Tibial artery (tissue), 4 donors: ENCODE measurements at regions of chr14 and their contacts with region 1.

Region 1: DNA sequence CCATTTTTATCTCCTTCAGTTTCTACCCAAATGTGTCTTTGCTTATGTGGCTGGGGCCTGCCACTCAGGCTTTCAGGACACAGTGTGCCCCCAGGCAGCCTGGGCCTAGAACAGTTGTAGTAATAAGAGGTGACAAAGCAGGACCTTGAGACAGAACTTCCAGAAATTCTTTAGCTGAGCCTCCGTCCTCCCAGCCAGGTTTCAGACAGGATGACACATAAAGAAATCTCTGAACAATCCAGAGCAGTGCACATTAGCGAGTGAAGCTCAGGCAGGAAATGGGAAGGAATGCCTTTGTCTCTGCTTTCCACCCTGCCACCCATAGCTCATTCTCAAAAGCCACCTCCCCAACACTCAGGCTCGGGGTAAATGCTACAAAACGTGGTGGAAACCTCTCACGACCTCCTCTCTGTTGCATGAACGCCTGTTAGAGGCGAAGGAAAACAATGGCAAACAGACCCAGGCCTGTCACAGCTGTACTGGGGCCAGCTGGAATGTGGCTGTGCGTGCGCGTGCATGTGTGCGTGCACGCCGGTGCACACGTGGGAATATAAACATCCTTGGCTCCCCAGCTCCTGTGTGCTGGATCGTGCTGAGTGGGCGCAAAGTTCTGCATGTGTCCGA is 286.7 kb downstream of the ZFP36L1 start:
- DNase-seq: no peak
- H3K4me3 ChIP-seq: no peak overlapping the region
- H3K27ac ChIP-seq: no peak overlapping the region
- H3K4me1 ChIP-seq: peaks cover 0 to 43% (median 21%) of the 10 kb centered on the region in 4 donors
- H3K27me3 ChIP-seq: no peaks in the 10 kb centered on the region
- CTCF ChIP-seq: no peak

Region 2: GRCh38 chr14:67541448-67542387 is 964.4 kb before region 1 on chr14:
- intact Hi-C with region 1: no loop called
- DNase-seq: no peak
- H3K4me3 ChIP-seq: no peak overlapping the region
- H3K27ac ChIP-seq: no peak overlapping the region
- H3K4me1 ChIP-seq: no peaks in the 10 kb centered on the region
- H3K27me3 ChIP-seq: peaks cover 0 to 3% of the 10 kb centered on the region in 2 donors
- CTCF ChIP-seq: no peak

Region 3: GRCh38 chr14:68412505-68413496 is 93.3 kb before region 1 on chr14:
- intact Hi-C with region 1: loop called (anchors 10 kb)
- DNase-seq: no peak
- H3K4me3 ChIP-seq: no peak overlapping the region
- H3K27ac ChIP-seq: no peak overlapping the region
- H3K4me1 ChIP-seq: peaks cover 0 to 8% (median 2%) of the 10 kb centered on the region in 4 donors
- H3K27me3 ChIP-seq: no peaks in the 10 kb centered on the region
- CTCF ChIP-seq: no peak